ENCODE measurements at regions of chr2 and their contacts with region 1.

Region 1: GRCh38 chr2:189412330-189412953 is 28.8 kb upstream of the WDR75 start:
- DNase-seq: peak; percentile 71
- H3K4me3 Mint-ChIP-seq: no peak overlapping the region
- H3K27ac Mint-ChIP-seq: no peak overlapping the region
- H3K4me1 Mint-ChIP-seq: peaks cover 24% of the 10 kb centered on the region
- H3K27me3 Mint-ChIP-seq: no peaks in the 10 kb centered on the region

Region 2: GRCh38 chr2:187499941-187500532 is 1912.4 kb before region 1 on chr2:
- CTCF ChIA-PET with region 1: no interaction called
- intact Hi-C with region 1: loop called (anchors 5 kb)
- DNase-seq: peak; percentile 75
- H3K4me3 Mint-ChIP-seq: no peak overlapping the region
- H3K27ac Mint-ChIP-seq: no peak overlapping the region
- H3K4me1 Mint-ChIP-seq: peaks cover 4% of the 10 kb centered on the region
- H3K27me3 Mint-ChIP-seq: peaks cover 4% of the 10 kb centered on the region

Region 3: DNA sequence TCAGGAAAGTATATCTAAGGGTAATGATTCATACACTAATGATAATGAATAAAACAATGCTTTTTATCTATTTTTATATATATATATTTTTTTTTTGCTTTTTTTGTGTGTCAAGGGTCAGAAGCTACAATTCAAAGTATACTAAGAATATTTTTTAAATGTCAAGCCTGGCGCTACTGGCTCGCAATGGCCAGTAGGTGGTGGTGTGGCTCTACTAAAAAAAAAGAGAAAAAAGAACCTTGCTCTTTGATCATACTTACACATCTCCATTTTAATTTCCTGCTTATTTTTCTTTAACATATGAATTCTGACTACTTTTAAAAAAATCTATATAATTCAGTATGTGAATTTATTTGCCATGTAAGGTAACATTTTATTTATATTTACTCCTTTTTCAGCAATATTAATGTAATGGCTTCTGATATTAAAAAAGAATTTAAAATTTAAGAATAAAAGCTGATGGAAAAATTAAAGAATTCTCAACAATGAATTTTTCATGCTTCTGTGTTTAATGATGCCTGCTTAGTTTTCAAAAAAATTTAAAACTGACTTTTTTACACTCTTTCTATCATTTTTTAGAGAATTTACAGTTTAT is 887.8 kb before region 1 on chr2:
- CTCF ChIA-PET with region 1: interaction called, 10 read pairs
- intact Hi-C with region 1: loop called (anchors 1 kb)
- DNase-seq: peak; percentile 35
- H3K4me3 Mint-ChIP-seq: no peak overlapping the region
- H3K27ac Mint-ChIP-seq: no peak overlapping the region
- H3K4me1 Mint-ChIP-seq: no peaks in the 10 kb centered on the region
- H3K27me3 Mint-ChIP-seq: peaks cover 2% of the 10 kb centered on the region

Region 4: DNA sequence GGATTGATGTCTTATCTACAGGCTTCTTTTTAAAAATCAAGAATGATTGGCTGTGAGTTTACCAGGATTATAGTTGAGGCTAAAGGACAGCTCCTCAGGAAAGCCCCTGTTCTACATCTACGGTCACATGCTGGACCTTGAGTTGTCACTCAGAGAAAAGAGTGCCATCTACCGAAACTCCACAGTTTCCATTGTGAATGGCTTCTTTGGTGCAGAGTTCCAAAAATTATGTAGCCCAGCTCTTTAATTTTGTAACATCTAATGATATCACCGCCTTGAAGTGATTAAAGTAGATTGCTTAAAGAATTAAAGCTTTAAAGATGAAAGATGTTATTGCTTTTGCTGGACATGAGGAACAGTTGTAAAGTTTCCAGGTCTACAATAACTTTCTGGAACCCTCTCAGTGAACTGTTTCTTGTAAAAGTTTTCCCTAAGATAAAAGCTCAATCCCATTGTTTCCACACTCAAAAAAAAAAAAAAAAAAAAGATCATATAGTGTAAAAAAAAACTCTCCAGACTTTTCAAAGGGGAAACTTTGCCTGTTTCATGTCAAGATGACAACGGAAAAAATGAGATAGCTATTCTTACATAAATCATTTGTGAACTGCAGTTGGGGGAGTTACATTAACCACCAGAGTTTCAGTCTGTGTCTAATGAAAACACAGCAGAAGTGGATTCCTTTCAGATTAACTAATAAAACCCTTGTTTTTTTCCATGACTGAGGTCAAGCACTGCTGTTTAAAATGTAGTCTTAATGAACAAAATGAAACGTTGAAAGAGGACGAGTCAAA is 434.0 kb before region 1 on chr2:
- CTCF ChIA-PET with region 1: no interaction called
- intact Hi-C with region 1: loop called (anchors 2 kb)
- DNase-seq: peak; percentile 6
- H3K4me3 Mint-ChIP-seq: peak overlapping the region; percentile 7
- H3K27ac Mint-ChIP-seq: peak overlapping the region; percentile 51
- H3K4me1 Mint-ChIP-seq: peaks cover 19% of the 10 kb centered on the region
- H3K27me3 Mint-ChIP-seq: peaks cover 19% of the 10 kb centered on the region

Region 5: DNA sequence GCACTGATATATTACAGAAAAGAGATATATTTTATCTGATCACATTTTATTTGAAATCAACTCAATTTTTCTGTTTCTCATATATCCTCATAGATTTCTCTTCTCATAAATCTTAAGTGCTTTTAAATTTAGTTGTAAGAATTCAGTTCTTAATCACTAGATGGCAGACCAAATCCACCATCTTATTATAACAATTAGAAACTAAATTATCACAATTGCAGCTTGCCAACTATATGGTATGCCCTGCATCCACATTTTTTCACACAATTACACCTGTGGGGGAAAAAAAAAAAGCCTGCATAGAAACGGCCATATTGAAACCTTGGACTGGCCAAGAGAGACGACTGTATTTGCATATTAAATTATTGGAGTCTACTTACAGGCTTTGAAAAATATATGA is 297.3 kb before region 1 on chr2:
- CTCF ChIA-PET with region 1: interaction called, 3 read pairs
- intact Hi-C with region 1: loop called (anchors 1 kb)
- DNase-seq: no peak
- H3K4me3 Mint-ChIP-seq: no peak overlapping the region
- H3K27ac Mint-ChIP-seq: no peak overlapping the region
- H3K4me1 Mint-ChIP-seq: peaks cover 22% of the 10 kb centered on the region
- H3K27me3 Mint-ChIP-seq: no peaks in the 10 kb centered on the region

Region 6: DNA sequence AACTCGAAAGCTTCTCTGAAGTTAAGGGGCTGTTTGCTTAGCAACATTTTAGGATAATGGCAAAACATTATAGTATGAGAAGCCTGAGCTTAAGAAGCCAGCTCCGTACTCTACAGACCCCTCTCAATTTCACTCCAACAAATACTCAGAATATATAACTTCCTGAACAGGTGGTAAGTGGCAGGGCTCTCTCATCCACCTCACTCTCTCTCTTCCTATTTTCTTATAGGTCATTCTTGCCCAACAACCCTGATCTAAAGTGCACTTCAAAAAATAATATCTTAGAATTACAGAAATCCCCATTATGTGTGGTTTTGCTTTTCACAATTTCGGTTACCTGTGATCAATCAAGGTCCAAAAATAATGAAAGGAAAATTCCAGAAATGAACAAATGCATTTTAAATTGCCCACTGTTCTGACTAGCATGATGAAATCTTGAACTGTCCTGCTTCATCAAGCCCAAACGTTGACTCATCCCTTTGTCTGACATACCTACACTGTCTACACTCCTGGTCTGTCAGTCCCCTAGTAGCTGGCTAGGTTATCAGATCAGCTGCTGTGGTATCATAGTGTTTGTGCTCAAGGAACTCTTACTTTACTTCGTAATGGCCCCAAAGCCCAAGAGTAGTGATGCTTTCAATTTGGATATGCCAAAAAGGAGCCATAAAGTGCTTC is 110.0 kb before region 1 on chr2:
- CTCF ChIA-PET with region 1: no interaction called
- intact Hi-C with region 1: loop called (anchors 5 kb)
- DNase-seq: peak; percentile 41
- H3K4me3 Mint-ChIP-seq: peak overlapping the region; percentile 7
- H3K27ac Mint-ChIP-seq: peak overlapping the region; percentile 91
- H3K4me1 Mint-ChIP-seq: peaks cover 79% of the 10 kb centered on the region
- H3K27me3 Mint-ChIP-seq: no peaks in the 10 kb centered on the region

Region 7: DNA sequence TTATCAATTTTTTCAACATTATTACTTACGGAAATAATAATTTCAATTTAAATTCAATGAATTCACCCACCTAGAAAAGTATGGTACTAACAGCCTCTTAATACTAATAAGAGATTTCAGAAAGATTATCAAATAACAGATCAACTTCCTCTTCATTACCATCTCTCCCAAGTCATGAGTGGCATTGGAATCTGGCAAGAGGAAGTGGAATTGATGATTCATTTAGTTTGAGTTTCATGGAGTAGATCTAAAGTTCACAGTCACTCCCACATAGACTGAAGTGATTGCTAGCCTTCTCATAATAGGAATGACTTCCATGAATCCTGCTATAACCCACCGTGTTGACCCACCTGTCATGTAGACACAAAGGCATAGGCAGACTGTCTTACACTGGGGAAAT is 48.9 kb before region 1 on chr2:
- CTCF ChIA-PET with region 1: no interaction called
- intact Hi-C with region 1: loop called (anchors 2 kb)
- DNase-seq: no peak
- H3K4me3 Mint-ChIP-seq: no peak overlapping the region
- H3K27ac Mint-ChIP-seq: no peak overlapping the region
- H3K4me1 Mint-ChIP-seq: peaks cover 13% of the 10 kb centered on the region
- H3K27me3 Mint-ChIP-seq: no peaks in the 10 kb centered on the region